Activated CD4-positive, alpha-beta T cell treated with anti-CD3 and anti-CD28 coated beads for 36 hours (primary cell): ENCODE measurements at regions of chr7 and their contacts with region 1.

Region 1: DNA sequence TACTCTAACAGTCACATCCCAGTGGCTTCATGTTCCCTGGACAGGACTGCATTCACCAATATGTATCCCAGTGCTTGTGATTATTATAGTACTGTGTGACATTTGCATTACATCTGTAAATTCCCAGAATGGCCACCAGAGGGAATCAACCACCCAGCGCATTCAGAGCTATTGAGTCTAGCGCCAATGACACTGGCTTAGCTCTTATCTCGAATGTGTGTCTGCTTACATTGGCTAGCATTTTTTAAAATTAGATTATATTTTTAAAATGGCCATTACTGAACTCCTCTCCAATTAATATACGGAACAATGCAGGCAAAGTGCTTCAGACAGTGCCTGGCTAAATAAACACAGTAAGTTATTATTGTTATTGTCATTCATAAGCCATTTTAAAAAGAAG is 36.3 kb downstream of the TRIL start:
- DNase-seq: peak; percentile 48
- ATAC-seq: peak; percentile 89
- H3K4me3 Mint-ChIP-seq: no peak overlapping the region
- H3K27ac Mint-ChIP-seq: no peak overlapping the region
- H3K4me1 Mint-ChIP-seq: peaks cover 15% of the 10 kb centered on the region
- H3K27me3 Mint-ChIP-seq: peaks cover 7% of the 10 kb centered on the region

Region 2: GRCh38 chr7:28937619-28938018 is 15.8 kb after region 1 on chr7:
- CTCF ChIA-PET with region 1: interaction called, 57 read pairs
- POLR2A ChIA-PET with region 1: no interaction called
- intact Hi-C with region 1: no loop called
- DNase-seq: no peak
- ATAC-seq: no peak
- H3K4me3 Mint-ChIP-seq: no peak overlapping the region
- H3K27ac Mint-ChIP-seq: no peak overlapping the region
- H3K4me1 Mint-ChIP-seq: no peaks in the 10 kb centered on the region
- H3K27me3 Mint-ChIP-seq: peaks cover 14% of the 10 kb centered on the region

Region 3: DNA sequence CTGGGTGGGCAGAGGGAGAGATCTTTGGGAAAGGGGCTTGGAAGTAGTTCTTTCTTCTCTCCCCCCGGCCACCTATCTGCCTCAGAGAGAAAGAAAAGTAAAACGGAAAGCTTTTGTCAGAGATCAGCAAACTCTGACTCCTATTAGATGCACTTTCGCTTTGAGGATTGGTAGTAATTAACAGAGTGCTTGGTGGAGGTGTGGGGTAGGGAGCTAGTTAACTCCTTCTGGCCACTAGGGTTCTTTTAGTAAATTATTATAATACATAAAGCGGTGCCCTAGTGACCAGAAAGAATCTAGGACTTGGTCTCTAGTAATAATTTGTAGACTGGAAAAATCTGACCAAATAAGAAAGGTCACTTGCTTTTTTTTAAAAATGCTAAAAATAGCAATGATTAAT is 169.9 kb after region 1 on chr7:
- CTCF ChIA-PET with region 1: interaction called, 241 read pairs
- POLR2A ChIA-PET with region 1: no interaction called
- intact Hi-C with region 1: no loop called
- DNase-seq: peak; percentile 27
- ATAC-seq: peak; percentile 95
- H3K4me3 Mint-ChIP-seq: peak overlapping the region; percentile 70
- H3K27ac Mint-ChIP-seq: peak overlapping the region; percentile 91
- H3K4me1 Mint-ChIP-seq: peaks cover 12% of the 10 kb centered on the region
- H3K27me3 Mint-ChIP-seq: peaks cover 2% of the 10 kb centered on the region

Region 4: GRCh38 chr7:29113384-29114103 is 191.7 kb after region 1 on chr7:
- CTCF ChIA-PET with region 1: interaction called, 16 read pairs
- POLR2A ChIA-PET with region 1: no interaction called
- intact Hi-C with region 1: no loop called
- DNase-seq: peak; percentile 36
- ATAC-seq: peak; percentile 81
- H3K4me3 Mint-ChIP-seq: no peak overlapping the region
- H3K27ac Mint-ChIP-seq: no peak overlapping the region
- H3K4me1 Mint-ChIP-seq: peaks cover 13% of the 10 kb centered on the region
- H3K27me3 Mint-ChIP-seq: peaks cover 12% of the 10 kb centered on the region

Region 5: DNA sequence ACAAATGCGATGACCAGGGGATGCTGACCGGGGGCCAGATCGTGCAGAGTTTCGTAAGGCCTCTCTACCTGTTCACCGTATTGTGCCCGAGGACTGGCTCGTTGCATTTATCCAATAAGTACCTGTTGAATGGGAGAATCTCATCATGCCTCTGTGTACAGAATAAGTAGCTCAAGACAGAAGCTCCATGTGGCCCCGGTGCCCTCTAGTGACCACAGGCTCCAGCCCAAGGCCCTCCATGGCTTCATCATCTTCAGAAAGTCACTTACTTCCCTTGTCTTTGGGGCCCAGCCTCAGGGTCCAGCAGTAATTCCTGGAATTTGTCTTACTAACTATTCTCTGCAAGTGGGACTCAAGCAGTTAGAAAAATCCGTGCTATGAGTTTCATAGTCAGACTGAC is 423.8 kb after region 1 on chr7:
- CTCF ChIA-PET with region 1: interaction called, 4 read pairs
- POLR2A ChIA-PET with region 1: no interaction called
- intact Hi-C with region 1: loop called in 1 of 2 experiments (anchors 2 kb)
- DNase-seq: peak; percentile 50
- ATAC-seq: no peak
- H3K4me3 Mint-ChIP-seq: no peak overlapping the region
- H3K27ac Mint-ChIP-seq: no peak overlapping the region
- H3K4me1 Mint-ChIP-seq: no peaks in the 10 kb centered on the region
- H3K27me3 Mint-ChIP-seq: no peaks in the 10 kb centered on the region